Transverse colon (tissue), 4 donors: ENCODE measurements at regions of chr6 and their contacts with region 1.

Region 1: GRCh38 chr6:47413752-47414422 is 63.7 kb upstream of the CD2AP start:
- DNase-seq: no peak
- H3K4me3 ChIP-seq: peak overlapping the region in 3 of 4 donors; percentile 23 to 49 (median 37)
- H3K27ac ChIP-seq: peak overlapping the region; percentile 47 to 80 (median 72)
- H3K4me1 ChIP-seq: peaks cover 0 to 39% (median 12%) of the 10 kb centered on the region in 4 donors
- H3K27me3 ChIP-seq: no peaks in the 10 kb centered on the region
- CTCF ChIP-seq: peak; percentile 84 to 92 (median 89)
- EP300 ChIP-seq: no peak
- POLR2A ChIP-seq: no peak

Region 2: DNA sequence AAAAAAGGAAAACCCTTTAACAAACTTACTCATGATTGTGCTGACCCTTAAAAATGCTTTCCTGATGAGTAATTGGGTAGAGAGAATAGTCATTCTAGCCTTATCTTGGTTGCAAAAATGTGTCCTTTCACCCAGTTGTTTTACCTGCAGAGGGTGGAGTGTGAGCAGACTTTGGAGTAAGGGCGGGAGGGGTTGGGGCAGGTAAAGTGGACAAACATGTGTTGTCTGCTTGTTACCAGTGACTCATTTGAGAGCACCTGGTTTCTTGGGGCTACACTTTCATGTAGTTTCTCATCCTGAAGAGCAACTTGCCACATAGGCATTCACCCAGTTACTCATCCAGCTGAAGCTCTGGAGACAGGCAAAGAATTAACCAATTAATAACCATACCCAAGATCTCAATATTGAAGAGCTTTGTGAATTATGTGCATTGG is 225.3 kb before region 1 on chr6:
- in situ Hi-C with region 1: no loop called
- intact Hi-C with region 1: no loop called
- DNase-seq: peak; percentile 70
- H3K4me3 ChIP-seq: no peak overlapping the region
- H3K27ac ChIP-seq: peak overlapping the region; percentile 64 to 86 (median 77)
- H3K4me1 ChIP-seq: peaks cover 6 to 24% (median 13%) of the 10 kb centered on the region in 4 donors
- H3K27me3 ChIP-seq: no peaks in the 10 kb centered on the region
- CTCF ChIP-seq: no peak
- EP300 ChIP-seq: peak; percentile 64
- POLR2A ChIP-seq: no peak

Region 3: DNA sequence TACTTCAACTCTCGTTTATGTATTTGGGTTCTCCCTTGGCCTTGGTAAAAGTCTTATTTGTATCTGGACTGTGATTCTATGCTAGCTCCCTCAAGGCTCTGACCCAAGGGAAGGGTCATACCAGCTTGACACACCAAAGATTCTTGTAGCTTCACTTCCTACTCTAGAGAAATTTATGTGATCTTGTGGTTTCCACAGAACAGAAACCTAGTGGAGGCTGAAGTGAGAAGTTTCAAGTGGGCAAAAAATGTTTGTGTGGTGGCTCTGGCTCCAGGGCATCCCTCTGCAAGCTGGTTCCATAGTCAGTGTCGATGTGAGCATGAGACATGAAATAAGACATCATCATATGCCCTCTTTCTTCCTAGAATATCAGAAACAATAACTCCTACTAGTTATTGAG is 56.1 kb before region 1 on chr6:
- in situ Hi-C with region 1: no loop called
- intact Hi-C with region 1: no loop called
- DNase-seq: no peak
- H3K4me3 ChIP-seq: no peak overlapping the region
- H3K27ac ChIP-seq: no peak overlapping the region
- H3K4me1 ChIP-seq: peaks cover 0 to 6% (median 0%) of the 10 kb centered on the region in 4 donors
- H3K27me3 ChIP-seq: no peaks in the 10 kb centered on the region
- CTCF ChIP-seq: no peak
- EP300 ChIP-seq: no peak
- POLR2A ChIP-seq: no peak

Region 4: DNA sequence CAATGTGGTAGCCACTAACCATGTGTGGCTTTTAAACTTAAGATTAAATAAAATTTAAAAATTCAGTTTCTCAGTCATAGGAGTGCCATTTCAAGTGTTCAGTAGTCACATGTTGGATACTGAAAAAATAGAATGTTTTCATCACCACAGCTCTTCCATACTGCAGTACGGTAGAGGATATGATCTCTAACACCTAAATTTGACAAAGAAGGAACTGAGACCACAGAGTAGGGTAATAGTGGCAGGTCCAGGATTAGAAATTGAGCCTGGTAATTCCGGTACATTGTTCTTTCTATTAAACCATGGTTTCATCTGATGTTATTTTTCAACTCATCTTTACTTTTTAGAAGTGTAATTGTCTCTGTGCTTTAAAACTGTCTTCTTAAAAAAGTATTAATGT is 167.7 kb after region 1 on chr6:
- in situ Hi-C with region 1: loop called in 1 of 4 experiments (anchors 25 kb)
- intact Hi-C with region 1: no loop called
- DNase-seq: no peak
- H3K4me3 ChIP-seq: no peak overlapping the region
- H3K27ac ChIP-seq: no peak overlapping the region
- H3K4me1 ChIP-seq: no peaks in the 10 kb centered on the region
- H3K27me3 ChIP-seq: no peaks in the 10 kb centered on the region
- CTCF ChIP-seq: no peak
- EP300 ChIP-seq: no peak
- POLR2A ChIP-seq: no peak

Region 5: DNA sequence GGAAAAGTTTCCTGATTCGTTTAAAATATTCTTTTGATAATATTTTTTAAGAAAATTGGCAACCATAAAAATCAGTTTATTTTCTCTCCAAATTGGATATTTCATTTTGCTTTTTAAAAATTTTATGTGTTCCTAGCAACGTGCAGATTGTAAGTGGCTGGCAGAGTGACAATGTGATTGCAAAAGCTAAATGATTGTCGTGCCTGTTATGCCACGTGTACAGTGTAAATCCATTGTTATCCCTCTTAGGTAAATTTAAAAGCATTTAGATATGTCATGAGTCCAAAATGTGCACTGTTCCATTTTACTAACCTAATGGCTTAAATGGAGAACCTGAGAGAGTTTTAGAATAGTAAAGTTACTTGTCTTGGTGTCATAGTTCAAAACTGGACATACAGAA is 190.1 kb after region 1 on chr6:
- in situ Hi-C with region 1: loop called in 2 of 4 experiments (anchors 25 kb)
- intact Hi-C with region 1: no loop called
- DNase-seq: no peak
- H3K4me3 ChIP-seq: no peak overlapping the region
- H3K27ac ChIP-seq: no peak overlapping the region
- H3K4me1 ChIP-seq: peaks cover 5 to 39% (median 8%) of the 10 kb centered on the region in 4 donors
- H3K27me3 ChIP-seq: no peaks in the 10 kb centered on the region
- CTCF ChIP-seq: no peak
- EP300 ChIP-seq: no peak
- POLR2A ChIP-seq: no peak

Region 6: GRCh38 chr6:47769982-47770381 is 356.1 kb after region 1 on chr6:
- in situ Hi-C with region 1: loop called in 2 of 4 experiments (anchors 5 to 25 kb)
- intact Hi-C with region 1: no loop called
- DNase-seq: no peak
- H3K4me3 ChIP-seq: no peak overlapping the region
- H3K27ac ChIP-seq: no peak overlapping the region
- H3K4me1 ChIP-seq: no peaks in the 10 kb centered on the region
- H3K27me3 ChIP-seq: no peaks in the 10 kb centered on the region
- CTCF ChIP-seq: no peak
- EP300 ChIP-seq: no peak
- POLR2A ChIP-seq: no peak

Region 7: DNA sequence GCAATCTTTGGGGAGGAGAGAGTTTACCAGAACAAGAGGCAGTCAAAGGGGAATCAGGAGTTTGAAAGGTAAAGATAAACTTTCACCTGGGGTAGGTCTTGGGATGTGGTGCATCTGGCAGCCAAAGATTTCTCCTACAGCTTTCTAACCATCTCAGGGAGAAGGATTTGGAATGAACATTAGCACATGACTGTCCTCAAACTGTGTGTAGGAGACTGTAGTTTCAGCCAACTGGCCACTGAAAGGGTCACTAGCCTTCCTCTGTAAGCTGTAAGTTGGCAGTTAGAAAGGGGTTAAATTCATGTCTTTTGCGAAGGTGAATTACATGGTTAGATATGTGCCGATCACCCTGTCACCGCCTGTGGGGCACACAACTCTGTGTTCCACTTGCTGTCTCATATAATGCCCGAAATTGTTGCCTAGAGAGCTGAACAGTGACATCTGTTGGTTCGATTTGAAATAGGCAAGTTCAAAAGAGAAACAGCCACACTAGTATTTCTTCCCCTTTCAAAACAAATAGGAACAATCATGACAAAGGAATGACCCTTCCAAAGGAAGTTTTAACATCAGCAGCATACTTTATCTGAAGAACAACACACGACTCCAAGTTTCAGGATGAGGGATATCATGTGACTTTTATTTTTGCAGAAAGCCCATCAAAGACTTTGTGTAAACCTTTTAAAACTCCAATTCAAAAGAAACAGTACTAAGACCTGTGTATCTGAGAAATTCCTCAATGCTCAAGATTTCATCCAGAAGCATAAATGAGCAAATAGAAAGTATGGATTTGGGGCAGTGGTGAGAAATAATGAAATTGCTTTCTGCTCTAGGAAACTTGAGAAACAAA is 366.8 kb after region 1 on chr6:
- in situ Hi-C with region 1: loop called in 1 of 4 experiments (anchors 25 kb)
- intact Hi-C with region 1: loop called (anchors 5 kb)
- DNase-seq: peak; percentile 22
- H3K4me3 ChIP-seq: no peak overlapping the region
- H3K27ac ChIP-seq: no peak overlapping the region
- H3K4me1 ChIP-seq: peaks cover 0 to 7% (median 1%) of the 10 kb centered on the region in 4 donors
- H3K27me3 ChIP-seq: peaks cover 2% of the 10 kb centered on the region
- CTCF ChIP-seq: peak; percentile 58 to 71 (median 63)
- EP300 ChIP-seq: no peak
- POLR2A ChIP-seq: no peak

Region 8: GRCh38 chr6:47787620-47788497 is 374.0 kb after region 1 on chr6:
- in situ Hi-C with region 1: loop called in 1 of 4 experiments (anchors 25 kb)
- intact Hi-C with region 1: loop called (anchors 5 kb)
- DNase-seq: peak; percentile 47
- H3K4me3 ChIP-seq: no peak overlapping the region
- H3K27ac ChIP-seq: no peak overlapping the region
- H3K4me1 ChIP-seq: peaks cover 0 to 7% (median 1%) of the 10 kb centered on the region in 4 donors
- H3K27me3 ChIP-seq: peaks cover 27% of the 10 kb centered on the region
- CTCF ChIP-seq: peak; percentile 75 to 89 (median 82)
- EP300 ChIP-seq: no peak
- POLR2A ChIP-seq: no peak